ENCODE measurements at regions of chr2 and their contacts with region 1.

Region 1: DNA sequence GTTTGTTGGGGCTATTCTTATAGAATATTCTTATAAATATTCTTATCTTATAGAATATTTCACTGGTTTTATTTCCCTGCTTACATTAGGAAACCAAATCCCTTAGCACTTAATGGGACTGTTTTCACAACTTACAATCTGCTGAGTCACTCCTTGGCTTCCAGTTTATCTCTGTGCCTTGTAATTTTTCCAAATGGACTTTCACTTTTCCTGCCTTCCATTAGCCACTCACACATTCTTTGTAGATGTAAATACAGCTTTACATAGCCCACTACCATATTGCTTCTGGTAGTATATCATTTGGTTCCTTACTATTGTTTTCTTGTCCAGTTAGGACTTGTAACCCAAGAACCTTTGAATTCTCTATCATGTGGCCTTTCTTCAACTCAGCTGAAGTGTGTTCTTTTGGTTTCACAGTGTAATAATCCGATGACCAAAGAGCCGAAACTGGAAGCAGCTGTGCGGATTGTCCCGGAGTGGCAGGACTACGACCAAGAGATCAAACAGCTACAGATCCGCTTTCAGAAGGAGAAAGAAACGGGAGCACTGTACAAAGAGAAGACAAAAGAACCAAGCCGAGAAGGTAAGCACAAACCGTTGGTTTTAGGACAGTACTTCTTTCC is 96.1 kb downstream of the UGGT1 start:
- DNase-seq: no peak

Region 2: GRCh38 chr2:128313091-128313836 is 126.1 kb after region 1 on chr2:
- intact Hi-C with region 1: loop called (anchors 5 kb)
- DNase-seq: peak in 32 of 42 donors; percentile 3 to 43 (median 12)

Measured in head of caudate nucleus (tissue), 42 donors.